ENCODE measurements at regions of chr14 and their contacts with region 1.

Region 1: GRCh38 chr14:23057757-23058653 is 685 bp upstream of the CDH24 start:
- DNase-seq: peak; percentile 90
- H3K4me3 Mint-ChIP-seq: peak overlapping the region; percentile 83
- H3K27ac Mint-ChIP-seq: no peak overlapping the region
- H3K4me1 Mint-ChIP-seq: peaks cover 40% of the 10 kb centered on the region
- H3K27me3 Mint-ChIP-seq: no peaks in the 10 kb centered on the region
- CTCF ChIP-seq: peak; percentile 94

Region 2: DNA sequence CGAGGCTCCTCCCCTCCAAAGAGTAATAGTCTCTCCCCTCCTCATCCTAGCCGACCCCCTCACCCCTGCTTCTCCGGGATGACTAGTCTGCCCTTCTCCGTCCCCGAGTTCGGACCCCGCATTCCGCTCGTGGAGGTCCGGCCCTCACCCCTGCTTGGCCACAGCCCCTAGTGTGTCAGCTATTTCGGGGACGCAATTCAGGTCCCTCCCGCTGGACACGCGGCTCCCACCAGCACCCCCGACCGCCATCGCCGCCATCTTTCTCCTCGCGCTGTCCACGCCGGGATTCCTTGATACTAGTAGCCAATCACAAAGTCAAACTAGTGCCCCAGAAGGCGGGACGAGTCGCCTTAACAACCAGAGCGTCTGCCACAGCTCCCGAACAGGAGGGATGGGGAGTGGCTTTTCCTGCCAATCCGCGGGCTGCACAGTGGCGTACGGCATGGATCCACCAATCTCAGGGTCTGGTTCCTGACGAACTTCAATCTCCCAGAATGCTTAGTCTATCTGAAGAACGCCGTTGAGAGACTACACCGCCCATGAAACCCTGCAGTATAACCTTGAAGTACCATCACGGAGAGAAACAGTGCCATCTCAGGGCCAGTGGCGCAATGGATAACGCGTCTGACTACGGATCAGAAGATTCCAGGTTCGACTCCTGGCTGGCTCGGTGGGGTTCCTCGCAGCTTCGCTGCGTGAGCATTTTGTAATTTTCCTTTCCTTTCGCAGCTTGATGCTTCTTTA is 128.7 kb before region 1 on chr14 and contains the start of gene PRMT5:
- CTCF ChIA-PET with region 1: interaction called, 8 read pairs
- POLR2A ChIA-PET with region 1: interaction called, 15 read pairs
- intact Hi-C with region 1: loop called (anchors 2 kb)
- DNase-seq: peak; percentile 99
- H3K4me3 Mint-ChIP-seq: no peak within 1 kb of the TSS
- H3K27ac Mint-ChIP-seq: no peak within 1 kb of the TSS
- H3K4me1 Mint-ChIP-seq: peaks cover 15% of the 10 kb centered on the region
- H3K27me3 Mint-ChIP-seq: no peaks in the 10 kb centered on the region
- CTCF ChIP-seq: no peak
- total RNA-seq, gene PRMT5: 175 and 201 TPM in 2 replicates

Region 3: DNA sequence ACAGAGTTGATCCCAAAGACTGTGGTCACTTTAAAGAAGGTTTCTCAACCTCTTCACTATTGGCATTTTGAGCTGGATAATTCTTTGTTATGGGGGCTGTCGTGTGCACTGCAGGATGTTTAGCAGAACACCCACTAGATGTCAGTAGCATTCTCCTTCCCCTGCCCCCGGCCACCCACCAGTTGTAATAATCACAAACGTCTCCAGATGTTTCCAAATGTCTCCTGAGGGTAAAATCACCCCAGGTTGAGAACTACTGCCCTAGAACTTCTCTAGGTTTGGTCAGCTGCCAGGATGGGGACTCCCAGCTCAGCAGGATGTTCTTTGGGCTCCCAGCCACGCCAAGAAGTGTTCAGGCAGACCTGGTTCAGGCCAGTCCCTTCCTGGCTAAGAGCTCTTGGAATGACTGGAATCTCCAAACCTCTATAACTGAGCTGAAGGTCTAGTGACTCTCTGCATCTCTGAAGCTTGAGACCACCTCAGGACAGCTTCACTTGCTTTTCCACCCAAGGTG is 63.2 kb before region 1 on chr14:
- CTCF ChIA-PET with region 1: interaction called, 620 read pairs
- POLR2A ChIA-PET with region 1: interaction called, 15 read pairs
- intact Hi-C with region 1: loop called (anchors 1 kb)
- DNase-seq: peak; percentile 84
- H3K4me3 Mint-ChIP-seq: no peak overlapping the region
- H3K27ac Mint-ChIP-seq: no peak overlapping the region
- H3K4me1 Mint-ChIP-seq: peaks cover 16% of the 10 kb centered on the region
- H3K27me3 Mint-ChIP-seq: no peaks in the 10 kb centered on the region
- CTCF ChIP-seq: peak; percentile 44

Region 4: DNA sequence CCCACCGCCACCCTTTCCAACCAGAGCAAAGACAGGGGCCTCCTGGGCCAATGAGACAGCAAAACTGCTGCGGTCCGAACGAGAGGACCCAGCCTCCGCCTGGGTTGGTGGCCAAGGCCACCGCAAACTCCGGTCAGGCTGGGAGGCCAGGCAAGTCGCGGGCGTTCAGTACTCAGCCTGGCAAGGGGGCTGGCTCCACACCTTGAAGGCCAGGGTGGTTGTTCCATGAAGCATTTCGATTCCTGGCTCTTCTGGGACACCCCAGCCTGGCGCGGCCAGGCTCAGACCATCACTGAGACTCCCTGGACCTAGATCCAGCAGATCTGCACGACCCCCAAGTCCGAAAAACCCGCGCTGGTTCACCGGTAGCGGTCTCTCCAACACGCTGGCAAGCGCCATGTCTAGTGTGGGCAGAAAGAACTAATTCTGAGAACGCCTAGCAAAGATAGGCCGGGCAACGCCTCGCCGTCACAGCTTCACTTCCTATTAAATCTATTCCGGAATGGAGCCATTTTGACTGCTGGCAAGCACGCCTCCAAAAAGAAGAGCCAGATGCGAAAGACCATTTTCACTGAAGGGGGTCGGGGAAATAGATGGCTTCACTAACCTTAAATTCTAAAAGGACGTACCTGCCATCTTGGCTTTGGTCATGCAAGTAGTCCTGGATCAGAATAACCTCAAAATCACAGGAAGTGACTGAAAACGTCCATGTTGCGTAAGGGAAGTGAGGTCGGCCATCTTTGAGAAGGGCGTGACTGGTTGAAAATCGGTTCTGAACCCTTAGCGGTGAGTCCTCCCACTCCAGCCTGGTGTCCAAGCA is 23.3 kb before region 1 on chr14 and contains the start of gene PSMB5:
- CTCF ChIA-PET with region 1: interaction called, 10 read pairs
- POLR2A ChIA-PET with region 1: interaction called, 4 read pairs
- intact Hi-C with region 1: no loop called
- DNase-seq: peak; percentile 96
- H3K4me3 Mint-ChIP-seq: peak within 1 kb of the TSS; percentile 92
- H3K27ac Mint-ChIP-seq: peak within 1 kb of the TSS; percentile 99
- H3K4me1 Mint-ChIP-seq: peaks cover 8% of the 10 kb centered on the region
- H3K27me3 Mint-ChIP-seq: no peaks in the 10 kb centered on the region
- CTCF ChIP-seq: no peak
- total RNA-seq, gene PSMB5: 162 and 173 TPM in 2 replicates

Region 5: DNA sequence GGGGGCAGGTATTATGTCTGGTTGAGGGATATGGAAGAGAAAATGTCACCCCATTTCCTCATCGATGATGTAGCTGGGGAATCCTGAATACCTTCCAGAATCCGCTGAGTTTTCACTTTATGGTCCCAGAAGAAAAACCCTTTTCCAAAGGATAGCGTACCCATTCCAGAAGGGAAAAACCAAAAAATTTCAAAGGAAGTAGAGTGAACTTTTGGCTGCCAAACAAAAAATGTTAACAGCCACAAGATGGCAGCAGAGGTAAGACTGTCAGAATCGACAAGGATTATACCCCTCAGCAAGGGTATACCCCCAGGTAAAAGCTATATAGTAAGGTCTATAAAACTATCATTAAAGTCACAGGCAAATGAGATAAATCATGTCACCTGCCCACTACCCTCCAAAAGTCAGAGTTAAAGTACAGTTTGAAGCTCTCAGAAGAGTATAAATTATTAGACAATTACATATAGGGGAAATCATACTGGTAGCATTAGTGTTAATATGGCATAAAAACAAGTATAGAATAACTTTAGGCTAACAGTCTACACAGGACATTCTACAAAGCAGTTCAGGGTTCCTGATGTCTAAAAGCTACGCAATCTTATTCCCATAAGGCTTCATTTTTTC is 18.9 kb after region 1 on chr14:
- CTCF ChIA-PET with region 1: interaction called, 57 read pairs
- POLR2A ChIA-PET with region 1: interaction called, 14 read pairs
- intact Hi-C with region 1: no loop called
- DNase-seq: peak; percentile 48
- H3K4me3 Mint-ChIP-seq: no peak overlapping the region
- H3K27ac Mint-ChIP-seq: no peak overlapping the region
- H3K4me1 Mint-ChIP-seq: peaks cover 30% of the 10 kb centered on the region
- H3K27me3 Mint-ChIP-seq: no peaks in the 10 kb centered on the region
- CTCF ChIP-seq: peak; percentile 55

Region 6: GRCh38 chr14:23109769-23110168 is 51.8 kb after region 1 on chr14:
- CTCF ChIA-PET with region 1: interaction called, 6 read pairs
- POLR2A ChIA-PET with region 1: no interaction called
- intact Hi-C with region 1: loop called (anchors 1 kb)
- DNase-seq: no peak
- H3K4me3 Mint-ChIP-seq: no peak overlapping the region
- H3K27ac Mint-ChIP-seq: no peak overlapping the region
- H3K4me1 Mint-ChIP-seq: peaks cover 5% of the 10 kb centered on the region
- H3K27me3 Mint-ChIP-seq: no peaks in the 10 kb centered on the region
- CTCF ChIP-seq: no peak

Region 7: DNA sequence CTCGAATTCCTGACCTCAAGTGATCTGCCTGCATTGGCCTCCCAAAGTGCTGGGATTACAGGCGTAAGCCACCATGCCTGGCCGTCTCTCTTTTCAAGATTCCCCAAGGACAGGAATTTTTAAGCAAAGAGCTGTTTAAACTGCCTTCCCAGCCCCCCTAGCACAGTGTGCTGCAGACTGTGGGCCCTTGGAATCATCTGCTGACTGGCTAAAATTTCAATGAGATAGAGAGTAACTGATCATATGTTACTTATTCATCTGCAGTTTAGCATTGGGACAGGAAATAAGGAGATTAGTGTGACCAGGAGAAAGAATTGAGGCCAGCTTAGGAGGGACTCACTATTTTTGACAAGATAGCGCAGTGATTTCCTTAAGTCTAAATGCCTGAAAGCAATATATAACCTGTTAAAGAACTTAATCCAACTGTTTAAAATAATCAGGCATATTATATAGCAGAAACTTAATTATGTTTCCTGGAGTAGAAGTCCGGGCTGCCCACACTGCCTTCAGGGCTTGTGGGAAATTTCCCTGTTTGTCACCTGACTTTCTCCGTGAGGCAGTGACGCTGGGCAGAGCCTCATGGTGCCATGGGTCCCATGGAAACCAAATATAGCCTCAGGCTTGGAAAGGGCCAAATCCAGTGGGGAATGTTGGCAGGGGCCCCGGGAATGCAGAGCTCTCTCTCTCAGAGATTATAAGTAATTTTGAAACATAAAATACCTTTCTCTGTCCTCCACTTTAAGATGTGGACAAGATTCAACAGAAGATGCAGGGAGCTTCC is 83.9 kb after region 1 on chr14:
- CTCF ChIA-PET with region 1: no interaction called
- POLR2A ChIA-PET with region 1: no interaction called
- intact Hi-C with region 1: no loop called
- DNase-seq: peak; percentile 83
- H3K4me3 Mint-ChIP-seq: no peak overlapping the region
- H3K27ac Mint-ChIP-seq: peak overlapping the region; percentile 83
- H3K4me1 Mint-ChIP-seq: peaks cover 59% of the 10 kb centered on the region
- H3K27me3 Mint-ChIP-seq: no peaks in the 10 kb centered on the region
- CTCF ChIP-seq: no peak